B cell (primary cell): ENCODE measurements at regions of chr1 and their contacts with region 1.

Region 1: DNA sequence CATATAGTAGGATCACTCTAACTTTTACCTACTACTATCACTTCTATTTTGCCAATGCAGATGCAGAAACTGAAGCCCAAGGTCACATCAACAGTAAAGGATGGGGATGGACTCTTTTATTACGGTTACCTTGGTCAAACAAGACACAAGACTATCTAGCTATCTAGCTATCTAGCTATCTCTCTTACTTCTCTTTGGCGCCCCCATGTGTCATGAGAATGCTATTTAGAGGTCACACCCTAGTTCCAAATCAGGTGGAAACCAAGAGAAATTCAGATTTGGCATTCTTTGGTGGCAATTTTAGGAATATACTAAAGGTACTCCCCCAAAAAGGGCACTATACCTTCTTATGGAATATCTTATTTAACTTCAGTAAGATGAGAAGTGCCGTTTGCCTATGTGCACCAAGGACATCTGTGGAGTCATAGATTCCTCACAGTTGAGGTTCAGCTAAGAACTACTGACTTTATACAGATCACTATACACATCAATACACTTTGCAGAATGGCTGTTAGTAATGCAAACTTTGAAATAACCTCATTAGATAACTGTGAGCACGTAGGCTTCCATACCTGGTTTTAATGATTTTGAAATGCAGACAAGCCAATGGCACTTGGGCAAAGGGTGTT is 6.7 kb downstream of the ZNF648 start:
- DNase-seq: peak; percentile 57
- ATAC-seq: no peak
- H3K4me3 ChIP-seq: no peak overlapping the region
- H3K4me3 Mint-ChIP-seq: no peak overlapping the region
- H3K27ac ChIP-seq: no peak overlapping the region
- H3K27ac Mint-ChIP-seq: no peak overlapping the region
- H3K4me1 ChIP-seq: no peaks in the 10 kb centered on the region
- H3K4me1 Mint-ChIP-seq: no peaks in the 10 kb centered on the region
- H3K27me3 ChIP-seq: peaks cover 0 to 27% (median 7%) of the 10 kb centered on the region in 4 experiments
- H3K27me3 Mint-ChIP-seq: peaks cover 26% of the 10 kb centered on the region
- CTCF ChIP-seq: peak; percentile 80

Region 2: GRCh38 chr1:181189691-181190363 is 865.0 kb before region 1 on chr1:
- CTCF ChIA-PET with region 1: interaction called, 8 read pairs
- POLR2A ChIA-PET with region 1: no interaction called
- intact Hi-C with region 1: loop called (anchors 2 kb)
- DNase-seq: peak; percentile 68
- ATAC-seq: peak; percentile 62
- H3K4me3 ChIP-seq: peak overlapping the region in 1 of 5 experiments; percentile 35
- H3K4me3 Mint-ChIP-seq: no peak overlapping the region
- H3K27ac ChIP-seq: no peak overlapping the region
- H3K27ac Mint-ChIP-seq: no peak overlapping the region
- H3K4me1 ChIP-seq: peaks cover 7 to 10% of the 10 kb centered on the region in 2 donors
- H3K4me1 Mint-ChIP-seq: peaks cover 5% of the 10 kb centered on the region
- H3K27me3 ChIP-seq: peaks cover 0 to 30% (median 8%) of the 10 kb centered on the region in 4 experiments
- H3K27me3 Mint-ChIP-seq: peaks cover 56% of the 10 kb centered on the region
- CTCF ChIP-seq: peak; percentile 86

Region 3: GRCh38 chr1:182198049-182198501 is 143.3 kb after region 1 on chr1:
- CTCF ChIA-PET with region 1: no interaction called
- POLR2A ChIA-PET with region 1: no interaction called
- intact Hi-C with region 1: no loop called
- DNase-seq: no peak
- ATAC-seq: no peak
- H3K4me3 ChIP-seq: no peak overlapping the region
- H3K4me3 Mint-ChIP-seq: no peak overlapping the region
- H3K27ac ChIP-seq: no peak overlapping the region
- H3K27ac Mint-ChIP-seq: no peak overlapping the region
- H3K4me1 ChIP-seq: no peaks in the 10 kb centered on the region
- H3K4me1 Mint-ChIP-seq: no peaks in the 10 kb centered on the region
- H3K27me3 ChIP-seq: peaks cover 0 to 7% (median 3%) of the 10 kb centered on the region in 4 experiments
- H3K27me3 Mint-ChIP-seq: peaks cover 18% of the 10 kb centered on the region
- CTCF ChIP-seq: no peak